ENCODE measurements at regions of chr14 and their contacts with region 1.

Region 1: GRCh38 chr14:100677554-100678468 is 48.9 kb upstream of the DLK1 start:
- DNase-seq: peak; percentile 80
- ATAC-seq: peak; percentile 31
- H3K4me3 ChIP-seq: no peak overlapping the region; a peak in 1 of 6 replicates
- H3K27ac ChIP-seq: peak overlapping the region; percentile 69
- H3K4me1 ChIP-seq: peaks cover 87% of the 10 kb centered on the region
- H3K27me3 ChIP-seq: no peaks in the 10 kb centered on the region
- CTCF ChIP-seq: peak; percentile 41; the same call in 1 of the 2 replicates
- EP300 ChIP-seq: peak; percentile 53 to 78; a peak in 3 of 4 replicates
- POLR2A ChIP-seq: no peak
- RAD21 ChIP-seq: no peak

Region 2: DNA sequence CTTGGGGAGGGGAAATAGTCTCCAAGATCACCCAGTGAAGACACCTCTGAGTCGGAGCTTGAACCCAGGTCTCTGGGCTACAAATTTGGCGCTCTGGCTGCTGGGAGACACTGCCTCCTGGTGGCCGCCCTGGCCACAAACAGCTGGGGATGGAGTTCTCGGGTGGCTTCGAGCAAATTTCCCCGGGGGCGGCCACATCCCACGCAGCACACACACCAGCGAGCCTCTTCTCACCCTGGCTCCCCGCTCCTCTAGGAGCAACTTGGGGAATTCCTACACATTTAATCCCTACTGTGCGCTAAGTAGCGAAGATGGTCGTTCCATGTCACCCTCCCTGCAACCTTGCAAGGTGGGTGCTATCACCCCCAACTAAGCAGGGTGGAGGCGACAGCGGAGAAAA is 24.4 kb before region 1 on chr14:
- CTCF ChIA-PET with region 1: no interaction called
- POLR2A ChIA-PET with region 1: no interaction called
- in situ Hi-C with region 1: no loop called
- intact Hi-C with region 1: no loop called
- DNase-seq: no peak
- ATAC-seq: no peak
- H3K4me3 ChIP-seq: no peak overlapping the region
- H3K27ac ChIP-seq: no peak overlapping the region
- H3K4me1 ChIP-seq: peaks cover 43% of the 10 kb centered on the region
- H3K27me3 ChIP-seq: peaks cover 0 to 47% of the 10 kb centered on the region in 2 experiments; a peak in 4 of 5 replicates
- CTCF ChIP-seq: peak; percentile 57
- EP300 ChIP-seq: no peak
- POLR2A ChIP-seq: no peak
- RAD21 ChIP-seq: no peak

Region 3: DNA sequence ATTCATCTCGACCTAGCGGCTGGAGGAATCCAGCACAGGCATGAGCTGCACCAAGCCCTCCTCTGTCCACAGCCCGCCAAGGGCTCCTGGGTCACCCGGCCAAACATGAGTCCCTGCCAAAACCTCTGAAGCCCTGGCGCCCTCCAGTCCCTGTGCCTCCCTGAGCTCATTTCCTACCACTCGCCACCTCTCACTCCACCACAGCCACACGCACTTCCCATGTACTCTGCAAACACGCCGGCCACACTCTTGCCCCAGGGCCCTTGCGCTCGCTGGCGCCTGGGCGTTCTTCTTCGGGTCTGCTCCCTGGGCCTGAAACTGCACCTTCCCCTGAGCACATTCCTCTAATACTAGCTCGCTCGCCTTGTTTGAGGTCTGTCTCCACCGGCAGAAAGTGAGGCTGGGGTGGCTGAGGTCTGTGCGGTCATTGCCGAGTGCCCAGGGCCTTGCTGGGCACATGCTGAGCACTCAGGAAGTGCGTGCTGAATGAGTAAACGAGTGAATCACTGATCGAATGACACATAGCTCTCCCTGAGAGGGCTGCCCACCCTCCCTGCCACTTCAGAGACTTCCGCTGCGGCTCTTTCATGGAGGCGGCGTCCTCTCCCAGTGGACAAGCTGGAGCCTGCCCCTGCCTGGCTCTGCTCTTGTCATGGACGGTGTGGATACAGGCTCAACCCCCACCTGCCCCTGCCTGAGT is 15.2 kb after region 1 on chr14:
- CTCF ChIA-PET with region 1: no interaction called
- POLR2A ChIA-PET with region 1: interaction called, 13 read pairs
- in situ Hi-C with region 1: no loop called
- intact Hi-C with region 1: no loop called
- DNase-seq: peak; percentile 65
- ATAC-seq: peak; percentile 64
- H3K4me3 ChIP-seq: no peak overlapping the region; a peak in 1 of 6 replicates
- H3K27ac ChIP-seq: peak overlapping the region; percentile 32
- H3K4me1 ChIP-seq: peaks cover 73% of the 10 kb centered on the region
- H3K27me3 ChIP-seq: no peaks in the 10 kb centered on the region
- CTCF ChIP-seq: no peak
- EP300 ChIP-seq: peak in 1 of 2 experiments; percentile 49; a peak in 1 of 4 replicates
- POLR2A ChIP-seq: no peak
- RAD21 ChIP-seq: no peak